ENCODE measurements at regions of chr13 and their contacts with region 1.

Region 1: DNA sequence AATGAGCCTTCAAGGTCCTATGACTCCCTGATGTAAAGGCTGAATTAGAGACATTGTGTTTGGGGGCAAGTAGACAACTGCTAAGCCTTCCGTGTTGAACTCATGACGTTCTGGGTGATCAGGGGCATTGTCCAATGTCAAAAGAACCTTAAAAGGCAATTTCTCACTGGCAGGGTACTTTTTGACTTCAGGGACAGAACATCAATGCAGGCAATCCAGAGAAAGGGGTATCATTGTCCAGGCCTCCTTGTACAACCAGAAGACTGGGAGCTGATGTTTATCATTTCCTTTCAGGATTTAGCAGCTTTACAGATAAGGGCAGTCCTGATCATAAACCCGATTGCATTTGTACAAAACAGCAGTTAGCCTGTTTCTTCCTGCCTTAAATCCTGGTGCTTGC is 25.0 kb upstream of the SMAD9 start:
- DNase-seq: no peak
- ATAC-seq: no peak
- H3K4me3 ChIP-seq: no peak overlapping the region
- H3K27ac ChIP-seq: no peak overlapping the region
- H3K4me1 ChIP-seq: no peaks in the 10 kb centered on the region
- H3K27me3 ChIP-seq: no peaks in the 10 kb centered on the region
- CTCF ChIP-seq: no peak
- POLR2A ChIP-seq: no peak

Region 2: GRCh38 chr13:36870050-36870692 is 74.9 kb before region 1 on chr13:
- intact Hi-C with region 1: loop called in 1 of 10 experiments (anchors 2 kb)
- DNase-seq: no peak
- ATAC-seq: no peak
- H3K4me3 ChIP-seq: no peak overlapping the region
- H3K27ac ChIP-seq: no peak overlapping the region
- H3K4me1 ChIP-seq: no peaks in the 10 kb centered on the region
- H3K27me3 ChIP-seq: no peaks in the 10 kb centered on the region
- CTCF ChIP-seq: no peak
- POLR2A ChIP-seq: no peak